Sigmoid colon (tissue), 7 donors: ENCODE measurements at regions of chr18 and their contacts with region 1.

Region 1: DNA sequence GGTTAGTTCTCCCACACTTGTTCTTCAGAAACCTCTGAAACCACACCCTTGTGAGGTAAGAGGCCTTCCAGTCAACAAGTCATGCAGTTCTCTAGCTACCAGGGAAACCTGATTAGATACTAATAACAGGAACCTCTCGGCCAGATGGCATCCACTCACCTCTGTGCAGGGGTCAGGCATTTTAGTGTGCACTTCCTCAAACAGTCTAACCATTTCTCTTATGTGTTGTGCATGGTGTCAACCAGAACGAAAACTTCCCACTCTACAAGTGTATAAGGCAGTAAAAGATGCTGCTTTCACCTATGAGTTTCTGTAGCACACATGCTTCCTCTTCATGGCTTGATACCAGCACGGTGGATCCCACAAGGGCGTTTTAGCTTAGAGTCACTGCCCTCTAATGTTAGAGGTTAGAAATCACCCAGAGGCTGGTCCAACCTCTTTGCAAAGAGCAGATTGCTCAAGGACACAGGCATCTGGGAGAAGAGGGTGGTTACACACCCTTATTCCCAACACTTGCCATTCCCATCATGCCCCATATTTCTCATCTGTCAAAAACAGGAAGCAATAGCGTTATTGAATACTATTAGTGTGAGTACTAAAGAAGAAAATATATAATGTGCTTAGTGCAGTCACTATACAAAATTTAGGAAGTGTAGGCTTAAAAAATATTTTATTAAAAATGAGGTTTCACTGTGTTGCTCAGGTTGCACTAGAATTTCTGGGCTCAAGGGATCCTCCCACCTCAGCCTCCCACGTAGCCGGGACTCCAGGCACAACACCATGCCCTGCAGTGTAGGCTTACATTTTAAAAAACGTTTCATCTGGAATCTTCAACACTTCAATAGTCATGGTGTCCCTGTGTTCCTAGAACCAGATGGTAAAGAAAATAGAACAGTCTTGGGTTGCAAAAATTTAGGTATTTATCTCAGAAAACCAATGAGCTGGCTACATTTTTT is 34.5 kb upstream of the RAB31 start:
- DNase-seq: no peak
- H3K4me3 ChIP-seq: no peak overlapping the region
- H3K27ac ChIP-seq: no peak overlapping the region
- H3K4me1 ChIP-seq: peaks cover 0 to 13% (median 5%) of the 10 kb centered on the region in 4 donors
- H3K27me3 ChIP-seq: no peaks in the 10 kb centered on the region
- CTCF ChIP-seq: no peak
- EP300 ChIP-seq: no peak
- POLR2A ChIP-seq: no peak

Region 2: DNA sequence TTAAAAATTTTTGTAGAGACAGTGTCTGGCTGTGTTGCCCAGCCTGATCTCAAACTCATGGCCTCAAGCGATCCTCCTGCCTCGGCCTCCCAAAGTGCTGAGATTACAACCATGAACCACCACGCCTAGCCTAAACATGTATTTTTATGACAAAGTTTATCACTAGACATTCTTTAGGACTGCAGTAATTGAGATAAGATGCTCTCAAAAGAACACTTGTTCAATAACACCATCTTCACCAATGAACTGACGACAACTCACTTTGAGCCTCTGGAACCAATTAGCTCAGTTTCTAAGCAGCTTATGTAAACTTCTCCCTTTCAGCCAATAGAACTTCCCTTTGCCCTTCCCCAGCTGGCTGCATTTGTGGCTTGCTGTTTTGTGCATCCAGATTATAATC is 43.9 kb before region 1 on chr18:
- intact Hi-C with region 1: loop called (anchors 10 kb)
- DNase-seq: no peak
- H3K4me3 ChIP-seq: no peak overlapping the region
- H3K27ac ChIP-seq: no peak overlapping the region
- H3K4me1 ChIP-seq: peaks cover 0 to 8% (median 6%) of the 10 kb centered on the region in 4 donors
- H3K27me3 ChIP-seq: no peaks in the 10 kb centered on the region
- CTCF ChIP-seq: no peak
- EP300 ChIP-seq: no peak
- POLR2A ChIP-seq: no peak

Region 3: GRCh38 chr18:10205151-10205550 is 531.6 kb after region 1 on chr18:
- intact Hi-C with region 1: no loop called
- DNase-seq: no peak
- H3K4me3 ChIP-seq: no peak overlapping the region
- H3K27ac ChIP-seq: no peak overlapping the region
- H3K4me1 ChIP-seq: peaks cover 0 to 7% (median 0%) of the 10 kb centered on the region in 4 donors
- H3K27me3 ChIP-seq: no peaks in the 10 kb centered on the region
- CTCF ChIP-seq: no peak
- EP300 ChIP-seq: no peak
- POLR2A ChIP-seq: no peak